Left lung (tissue), 14 donors: ENCODE measurements at regions of chr19 and their contacts with region 1.

Region 1: GRCh38 chr19:4638828-4639530 is at the start of gene TNFAIP8L1:
- DNase-seq: peak; percentile 89 to 98 (median 96)
- ATAC-seq: peak; percentile 95
- H3K4me3 ChIP-seq: peak within 1 kb of the TSS; percentile 50 to 56
- H3K27ac ChIP-seq: peak within 1 kb of the TSS; percentile 65 to 88
- H3K4me1 ChIP-seq: peaks cover 0 to 68% of the 10 kb centered on the region in 2 donors
- H3K27me3 ChIP-seq: peaks cover 0 to 12% of the 10 kb centered on the region in 2 donors
- CTCF ChIP-seq: no peak
- polyA plus RNA-seq, gene TNFAIP8L1: 14.1 to 17.9 (median 16.9) TPM

Region 2: DNA sequence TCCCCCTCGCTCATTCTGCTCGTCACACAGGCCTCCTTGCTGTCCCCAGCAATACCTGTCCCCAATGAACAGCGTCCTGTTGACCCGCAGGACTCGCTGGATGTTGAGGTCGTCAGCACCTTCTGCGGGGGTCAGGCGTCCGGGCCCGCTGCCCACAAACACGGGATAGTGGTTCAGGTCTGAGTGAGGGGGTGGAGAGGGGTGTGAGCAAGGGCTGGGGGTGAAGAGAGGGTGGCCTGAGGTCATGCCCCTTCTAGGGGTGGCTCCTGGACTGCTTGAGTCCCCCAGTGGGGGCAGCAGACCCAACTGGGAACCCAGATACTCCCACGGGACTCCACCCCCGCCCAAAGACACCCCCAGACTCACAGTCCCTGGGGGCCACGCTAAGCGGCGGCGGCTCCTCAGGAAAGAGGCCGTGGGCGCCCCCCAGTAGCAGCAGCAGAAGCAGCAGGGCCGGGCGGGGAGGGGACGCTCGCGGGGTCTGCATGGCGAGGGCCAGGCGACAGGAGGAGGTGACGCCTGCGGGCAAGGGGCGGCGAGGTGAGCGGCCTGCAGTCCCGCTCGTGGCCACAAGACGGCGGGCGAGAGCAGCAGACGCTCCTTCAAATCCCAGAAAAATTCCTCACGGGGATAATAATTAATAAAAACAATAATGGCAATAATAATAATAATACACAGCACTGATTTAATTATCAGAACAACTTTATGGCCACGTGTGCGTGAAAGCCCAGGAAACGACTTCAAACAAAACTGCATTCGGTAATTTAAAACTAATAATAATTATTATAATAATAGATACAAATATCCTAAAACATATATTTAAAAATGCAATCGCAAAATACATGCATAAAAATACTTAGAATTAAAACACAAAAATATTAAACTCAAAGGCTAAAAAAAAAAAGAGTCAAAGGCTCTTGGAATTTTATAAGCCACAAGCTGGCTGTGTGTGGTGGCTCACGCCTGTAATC is 80.7 kb before region 1 on chr19:
- intact Hi-C with region 1: loop called in 1 of 2 experiments (anchors 5 kb)
- DNase-seq: peak in 2 of 4 donors; percentile 32 to 90
- ATAC-seq: peak; percentile 52
- H3K4me3 ChIP-seq: peak overlapping the region in 1 of 2 donors; percentile 58
- H3K27ac ChIP-seq: peak overlapping the region in 1 of 2 donors; percentile 84
- H3K4me1 ChIP-seq: peaks cover 0 to 58% of the 10 kb centered on the region in 2 donors
- H3K27me3 ChIP-seq: no peaks in the 10 kb centered on the region
- CTCF ChIP-seq: peak; percentile 100

Region 3: GRCh38 chr19:4571305-4571917 is 67.6 kb before region 1 on chr19:
- intact Hi-C with region 1: loop called in 1 of 2 experiments (anchors 5 kb)
- DNase-seq: no peak
- ATAC-seq: no peak
- H3K4me3 ChIP-seq: no peak overlapping the region
- H3K27ac ChIP-seq: no peak overlapping the region
- H3K4me1 ChIP-seq: peaks cover 5 to 34% of the 10 kb centered on the region in 2 donors
- H3K27me3 ChIP-seq: peaks cover 0 to 37% of the 10 kb centered on the region in 2 donors
- CTCF ChIP-seq: no peak